ENCODE measurements at regions of chr17 and their contacts with region 1.

Region 1: GRCh38 chr17:50783193-50783660 is 15.9 kb upstream of the ANKRD40CL start:
- DNase-seq: peak; percentile 71 to 77 (median 76)
- H3K4me3 ChIP-seq: no peak overlapping the region
- H3K4me3 Mint-ChIP-seq: no peak overlapping the region
- H3K27ac ChIP-seq: no peak overlapping the region
- H3K27ac Mint-ChIP-seq: no peak overlapping the region
- H3K4me1 ChIP-seq: peaks cover 0 to 3% of the 10 kb centered on the region in 2 donors
- H3K4me1 Mint-ChIP-seq: peaks cover 9% of the 10 kb centered on the region
- H3K27me3 ChIP-seq: peaks cover 0 to 6% of the 10 kb centered on the region in 2 donors
- H3K27me3 Mint-ChIP-seq: peaks cover 6 to 16% (median 14%) of the 10 kb centered on the region in 3 donors
- CTCF ChIP-seq: peak; percentile 96

Region 2: GRCh38 chr17:50841949-50842354 is 58.7 kb after region 1 on chr17:
- intact Hi-C with region 1: loop called (anchors 1 to 2 kb)
- DNase-seq: peak; percentile 42 to 55 (median 51)
- H3K4me3 ChIP-seq: no peak overlapping the region
- H3K4me3 Mint-ChIP-seq: no peak overlapping the region
- H3K27ac ChIP-seq: no peak overlapping the region
- H3K27ac Mint-ChIP-seq: peak overlapping the region in 1 of 7 donors; percentile 47
- H3K4me1 ChIP-seq: no peaks in the 10 kb centered on the region
- H3K4me1 Mint-ChIP-seq: peaks cover 2% of the 10 kb centered on the region
- H3K27me3 ChIP-seq: no peaks in the 10 kb centered on the region
- H3K27me3 Mint-ChIP-seq: no peaks in the 10 kb centered on the region
- CTCF ChIP-seq: peak; percentile 76

Region 3: GRCh38 chr17:50904521-50905459 is 121.6 kb after region 1 on chr17:
- intact Hi-C with region 1: no loop called
- DNase-seq: no peak
- H3K4me3 ChIP-seq: no peak overlapping the region
- H3K4me3 Mint-ChIP-seq: no peak overlapping the region
- H3K27ac ChIP-seq: no peak overlapping the region
- H3K27ac Mint-ChIP-seq: no peak overlapping the region
- H3K4me1 ChIP-seq: peaks cover 24 to 34% of the 10 kb centered on the region in 2 donors
- H3K4me1 Mint-ChIP-seq: peaks cover 40% of the 10 kb centered on the region
- H3K27me3 ChIP-seq: no peaks in the 10 kb centered on the region
- H3K27me3 Mint-ChIP-seq: peaks cover 0 to 9% (median 7%) of the 10 kb centered on the region in 3 donors
- CTCF ChIP-seq: no peak

Region 4: DNA sequence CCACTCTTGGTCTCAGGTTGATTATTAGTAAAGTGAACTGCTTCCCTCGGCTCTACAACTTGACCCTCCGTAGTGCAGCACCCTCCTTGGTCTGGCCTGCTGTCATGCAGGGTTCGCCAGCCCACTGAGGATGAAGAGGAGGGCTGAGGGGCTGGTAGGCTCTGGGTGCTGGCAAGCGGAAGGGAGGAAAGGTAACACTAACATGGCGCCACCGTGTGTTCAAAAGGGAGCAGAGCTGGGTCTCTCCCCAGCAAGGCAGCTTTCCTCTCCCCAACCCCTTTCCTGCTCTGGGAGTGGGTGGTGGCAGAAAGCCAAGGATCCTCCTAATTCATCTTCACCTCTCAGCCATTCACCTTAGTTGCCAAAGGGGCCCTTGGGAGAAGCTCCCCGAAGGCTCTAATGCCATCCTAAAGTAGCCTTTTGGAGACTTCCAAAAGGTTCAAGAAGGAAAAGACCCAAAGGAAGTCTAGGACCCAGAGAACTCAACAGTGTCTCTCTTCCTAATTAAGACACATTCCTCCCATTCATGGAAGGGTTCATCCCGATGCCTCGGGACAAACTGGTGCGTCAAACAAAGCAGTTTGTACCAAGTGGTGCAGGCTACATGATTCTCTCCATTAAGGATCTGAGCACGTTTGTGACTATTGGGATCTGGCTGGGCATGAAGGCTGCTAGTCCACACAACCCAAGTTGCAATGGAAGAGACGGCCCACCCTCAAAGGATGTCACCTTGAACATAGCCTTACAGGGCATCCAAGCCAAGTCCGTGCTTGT is 173.7 kb after region 1 on chr17:
- intact Hi-C with region 1: loop called (anchors 2 to 5 kb)
- DNase-seq: peak; percentile 54 to 69 (median 69)
- H3K4me3 ChIP-seq: no peak overlapping the region
- H3K4me3 Mint-ChIP-seq: no peak overlapping the region
- H3K27ac ChIP-seq: no peak overlapping the region
- H3K27ac Mint-ChIP-seq: peak overlapping the region in 3 of 7 donors; percentile 21 to 75 (median 61)
- H3K4me1 ChIP-seq: peaks cover 4 to 12% of the 10 kb centered on the region in 2 donors
- H3K4me1 Mint-ChIP-seq: peaks cover 19% of the 10 kb centered on the region
- H3K27me3 ChIP-seq: no peaks in the 10 kb centered on the region
- H3K27me3 Mint-ChIP-seq: peaks cover 4 to 12% (median 6%) of the 10 kb centered on the region in 3 donors
- CTCF ChIP-seq: peak; percentile 89